ENCODE measurements at regions of chr17 and their contacts with region 1.

Region 1: GRCh38 chr17:50194934-50195865 is 6.2 kb downstream of the COL1A1 start:
- DNase-seq: no peak
- ATAC-seq: no peak
- H3K4me3 ChIP-seq: no peak overlapping the region
- H3K27ac ChIP-seq: no peak overlapping the region
- H3K4me1 ChIP-seq: peaks cover 3% of the 10 kb centered on the region; the same call in 1 of the 2 replicates
- H3K27me3 ChIP-seq: no peaks in the 10 kb centered on the region
- CTCF ChIP-seq: no peak

Region 2: DNA sequence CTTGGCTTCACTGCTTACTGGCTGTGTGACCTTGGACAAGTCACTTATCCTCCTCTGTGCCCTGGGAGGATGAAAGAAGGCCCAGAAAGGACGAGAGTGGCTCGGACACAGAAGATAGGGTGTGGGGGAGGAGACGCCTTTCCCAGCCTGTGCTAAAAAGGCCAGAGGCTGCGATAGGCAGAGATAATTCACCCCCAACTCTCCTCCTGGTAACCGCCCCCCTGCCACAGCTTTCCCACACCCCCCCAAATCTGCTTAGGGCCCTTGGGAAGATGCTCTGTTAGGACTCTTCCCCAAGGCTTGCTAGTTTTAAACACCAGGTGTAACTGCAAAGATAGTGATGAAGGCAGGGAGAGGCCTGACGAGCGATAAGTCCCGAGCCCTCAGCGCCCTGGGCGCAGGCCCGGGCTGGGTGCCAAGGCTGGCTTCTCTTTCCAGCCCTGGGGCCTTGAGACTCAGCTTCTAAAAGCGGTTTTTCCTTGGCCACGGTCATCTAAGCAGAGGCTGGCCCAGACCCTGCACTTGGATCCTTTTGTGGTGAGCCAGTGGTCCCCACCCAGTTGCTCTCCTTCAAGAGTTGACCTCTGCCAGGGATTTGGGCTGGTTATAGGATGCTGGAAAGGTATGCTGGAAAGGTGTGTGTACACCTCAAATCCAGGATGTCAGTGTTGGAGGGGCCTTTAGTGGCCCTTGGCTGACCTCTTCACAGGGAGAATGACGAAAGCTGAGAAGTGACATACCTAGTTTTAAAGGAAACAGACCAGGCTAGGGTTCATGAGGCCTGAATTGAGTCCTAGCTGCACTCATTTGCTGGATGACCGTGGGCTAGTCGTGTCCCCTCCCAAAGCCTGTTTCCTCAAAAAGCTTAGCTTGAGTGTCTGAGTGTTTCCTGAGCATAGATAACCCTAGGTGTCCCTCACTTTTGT is 41.3 kb before region 1 on chr17:
- CTCF ChIA-PET with region 1: no interaction called
- POLR2A ChIA-PET with region 1: no interaction called
- in situ Hi-C with region 1: no loop called
- intact Hi-C with region 1: no loop called
- DNase-seq: no peak
- ATAC-seq: no peak
- H3K4me3 ChIP-seq: no peak overlapping the region
- H3K27ac ChIP-seq: peak overlapping the region; percentile 100
- H3K4me1 ChIP-seq: peaks cover 43% of the 10 kb centered on the region
- H3K27me3 ChIP-seq: no peaks in the 10 kb centered on the region
- CTCF ChIP-seq: no peak

Region 3: DNA sequence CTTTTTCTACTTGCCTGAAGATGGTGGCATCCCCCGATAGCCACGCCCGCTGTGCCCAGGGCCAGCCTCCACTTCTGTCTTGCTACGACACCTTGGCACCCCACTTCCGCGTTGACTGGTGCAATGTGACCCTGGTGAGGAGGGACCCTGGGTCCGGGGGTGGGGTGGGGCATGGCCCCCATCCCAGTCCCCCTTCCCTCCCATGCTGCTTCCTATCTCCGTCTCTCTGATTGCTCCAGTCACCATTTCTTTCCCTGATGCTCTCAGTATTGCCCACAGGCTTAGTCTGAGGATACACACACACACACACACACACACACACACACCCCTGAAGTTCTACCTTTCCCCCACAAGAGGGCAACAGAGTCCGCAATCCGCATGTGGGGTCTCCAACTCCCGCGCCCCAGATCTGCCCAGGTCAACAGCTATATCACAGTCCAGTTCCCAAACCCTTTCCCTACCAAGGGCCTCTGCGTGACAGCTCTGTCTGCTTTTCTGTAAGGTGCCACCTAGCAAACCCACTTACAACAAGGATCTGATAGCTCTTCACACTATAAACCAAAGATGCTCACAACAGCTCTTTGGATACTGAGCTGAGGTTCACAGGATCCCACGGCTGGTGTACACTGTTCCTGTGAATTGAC is 26.0 kb before region 1 on chr17:
- CTCF ChIA-PET with region 1: interaction called, 16 read pairs
- POLR2A ChIA-PET with region 1: no interaction called
- in situ Hi-C with region 1: no loop called
- intact Hi-C with region 1: loop called (anchors 1 kb)
- DNase-seq: peak; percentile 50
- ATAC-seq: peak; percentile 66
- H3K4me3 ChIP-seq: no peak overlapping the region
- H3K27ac ChIP-seq: no peak overlapping the region
- H3K4me1 ChIP-seq: 0 out of 2 replicates have a peak, but pooled peaks cover 3% of the 10 kb centered on the region
- H3K27me3 ChIP-seq: no peaks in the 10 kb centered on the region
- CTCF ChIP-seq: peak; percentile 94

Region 4: DNA sequence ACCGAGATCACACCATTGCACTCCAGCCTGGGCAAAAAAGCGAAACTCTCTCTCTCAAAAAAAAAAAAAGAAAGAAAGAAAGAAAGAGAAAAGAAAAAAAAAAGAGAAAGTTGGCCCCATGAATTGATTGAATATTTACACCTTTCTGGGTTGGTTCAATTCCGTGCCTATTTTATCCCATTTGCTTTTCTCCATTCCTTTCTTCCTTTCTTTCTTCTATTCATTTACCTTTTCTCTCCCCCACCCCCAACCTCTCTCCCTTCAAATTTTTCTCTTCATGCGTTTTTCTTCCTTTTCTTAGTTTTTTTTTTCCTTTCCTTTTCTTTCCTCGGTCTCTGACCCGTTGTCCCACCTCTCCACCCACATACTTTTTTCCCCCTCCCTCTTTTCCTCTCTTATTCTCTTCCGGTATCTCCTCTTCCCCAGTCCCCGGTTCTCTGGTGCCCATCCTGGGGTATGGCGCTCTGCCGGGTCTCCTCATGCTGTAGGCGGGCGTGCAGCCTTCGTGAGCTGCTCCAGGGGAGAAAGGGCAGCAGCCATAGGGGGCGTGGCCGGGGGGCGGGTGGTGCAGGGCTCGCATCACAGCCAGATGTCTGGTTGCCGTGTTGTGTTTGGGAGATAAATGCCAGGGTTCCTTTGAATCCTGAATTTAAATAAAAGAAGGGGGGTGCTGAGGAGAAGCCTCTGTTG is 11.5 kb after region 1 on chr17:
- CTCF ChIA-PET with region 1: interaction called, 13 read pairs
- POLR2A ChIA-PET with region 1: no interaction called
- in situ Hi-C with region 1: no loop called
- intact Hi-C with region 1: no loop called
- DNase-seq: no peak
- ATAC-seq: no peak
- H3K4me3 ChIP-seq: no peak overlapping the region
- H3K27ac ChIP-seq: no peak overlapping the region
- H3K4me1 ChIP-seq: peaks cover 19% of the 10 kb centered on the region
- H3K27me3 ChIP-seq: 0 out of 2 replicates have a peak, but pooled peaks cover 2% of the 10 kb centered on the region
- CTCF ChIP-seq: no peak

Measured in Panc1 (cell line).